ENCODE measurements at regions of chr15 and their contacts with region 1.

Region 1: DNA sequence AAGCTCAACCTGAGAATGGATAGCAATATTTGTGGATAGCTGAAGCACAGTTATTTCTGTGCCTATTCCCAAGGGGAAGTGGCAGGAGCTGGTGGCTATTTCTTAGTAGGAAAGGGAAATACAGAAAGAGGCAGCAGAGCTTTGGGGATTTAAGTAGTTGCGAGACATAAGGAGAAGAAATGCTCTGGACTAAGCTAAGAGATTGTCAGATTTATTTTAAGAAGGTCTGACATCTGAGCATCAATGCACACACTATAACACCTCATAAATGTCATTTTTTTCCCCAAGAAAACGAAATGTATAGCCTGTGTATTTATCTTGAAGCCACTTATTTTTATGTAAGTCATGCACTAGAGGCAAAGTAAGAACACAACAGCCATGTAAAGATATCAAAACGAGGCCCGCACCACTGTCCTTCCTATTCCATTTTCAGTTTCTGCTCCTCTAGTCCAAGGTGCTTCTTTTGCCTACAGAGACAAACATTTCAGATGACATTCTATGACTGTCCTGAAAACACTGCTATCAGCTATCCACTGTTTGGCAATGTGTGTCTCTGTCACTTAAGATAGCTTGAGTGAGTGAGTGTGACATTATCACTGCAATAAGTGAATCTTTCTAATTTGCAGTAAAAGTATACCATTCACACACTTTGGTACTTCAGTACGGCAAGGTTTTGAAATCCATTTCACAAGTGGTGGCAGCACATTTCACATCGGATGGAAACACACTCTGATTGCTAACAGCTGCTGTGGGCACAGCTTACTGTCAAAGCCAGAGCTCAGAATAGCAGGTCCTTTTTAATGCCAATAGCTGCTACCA is 62.7 kb upstream of the ICE2 start:
- DNase-seq: no peak
- H3K4me3 ChIP-seq: peak overlapping the region in 1 of 2 donors; percentile 2
- H3K4me3 Mint-ChIP-seq: peak overlapping the region; percentile 64 to 87 (median 80)
- H3K27ac ChIP-seq: peak overlapping the region; percentile 58
- H3K27ac Mint-ChIP-seq: peak overlapping the region; percentile 85 to 99 (median 92)
- H3K4me1 ChIP-seq: peaks cover 100% of the 10 kb centered on the region
- H3K4me1 Mint-ChIP-seq: peaks cover 84 to 100% (median 92%) of the 10 kb centered on the region in 4 donors
- H3K27me3 ChIP-seq: no peaks in the 10 kb centered on the region
- H3K27me3 Mint-ChIP-seq: no peaks in the 10 kb centered on the region

Region 2: GRCh38 chr15:60526127-60526625 is 15.5 kb before region 1 on chr15:
- CTCF ChIA-PET with region 1: interaction called, 35 read pairs
- POLR2A ChIA-PET with region 1: interaction called, 7 read pairs
- intact Hi-C with region 1: loop called (anchors 2 kb)
- DNase-seq: peak in 4 of 5 donors; percentile 35 to 73 (median 46)
- H3K4me3 ChIP-seq: no peak overlapping the region
- H3K4me3 Mint-ChIP-seq: peak overlapping the region in 7 of 8 donors; percentile 8 to 63 (median 39)
- H3K27ac ChIP-seq: peak overlapping the region; percentile 71
- H3K27ac Mint-ChIP-seq: peak overlapping the region; percentile 88 to 100 (median 97)
- H3K4me1 ChIP-seq: peaks cover 64% of the 10 kb centered on the region
- H3K4me1 Mint-ChIP-seq: peaks cover 61 to 85% (median 72%) of the 10 kb centered on the region in 4 donors
- H3K27me3 ChIP-seq: no peaks in the 10 kb centered on the region
- H3K27me3 Mint-ChIP-seq: no peaks in the 10 kb centered on the region

Region 3: GRCh38 chr15:60557191-60557618 is 15.5 kb after region 1 on chr15:
- CTCF ChIA-PET with region 1: interaction called, 10 read pairs
- POLR2A ChIA-PET with region 1: interaction called, 381 read pairs
- intact Hi-C with region 1: no loop called
- DNase-seq: peak; percentile 51 to 68 (median 64)
- H3K4me3 ChIP-seq: no peak overlapping the region
- H3K4me3 Mint-ChIP-seq: peak overlapping the region in 7 of 8 donors; percentile 9 to 82 (median 73)
- H3K27ac ChIP-seq: peak overlapping the region; percentile 47
- H3K27ac Mint-ChIP-seq: peak overlapping the region; percentile 77 to 94 (median 92)
- H3K4me1 ChIP-seq: peaks cover 92% of the 10 kb centered on the region
- H3K4me1 Mint-ChIP-seq: peaks cover 65 to 91% (median 79%) of the 10 kb centered on the region in 4 donors
- H3K27me3 ChIP-seq: no peaks in the 10 kb centered on the region
- H3K27me3 Mint-ChIP-seq: no peaks in the 10 kb centered on the region

Region 4: DNA sequence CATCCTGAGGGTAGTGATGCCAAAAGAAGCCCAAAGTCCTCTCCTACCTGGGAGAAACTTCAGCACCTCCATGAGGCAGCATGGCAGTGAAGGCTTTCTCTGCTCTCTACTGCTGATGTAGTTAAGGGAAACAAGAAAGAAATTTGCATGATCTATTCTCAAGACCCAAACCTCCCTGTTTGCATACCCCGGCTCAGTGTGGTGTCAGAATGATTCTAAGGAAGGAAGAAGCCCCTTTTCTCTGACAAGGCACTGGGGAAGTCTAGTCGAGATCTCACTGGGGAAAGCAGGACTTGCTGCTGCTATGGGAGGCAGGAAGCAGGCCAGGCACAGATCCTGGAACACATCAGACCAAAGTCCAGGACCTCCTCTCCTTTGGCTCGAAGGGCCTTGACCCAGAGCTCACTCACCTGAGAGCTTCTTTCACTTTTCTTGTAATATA is 26.6 kb after region 1 on chr15:
- CTCF ChIA-PET with region 1: interaction called, 4 read pairs
- POLR2A ChIA-PET with region 1: interaction called, 381 read pairs
- intact Hi-C with region 1: no loop called
- DNase-seq: peak in 1 of 5 donors; percentile 39
- H3K4me3 ChIP-seq: peak overlapping the region; percentile 2 to 20
- H3K4me3 Mint-ChIP-seq: peak overlapping the region; percentile 8 to 77 (median 70)
- H3K27ac ChIP-seq: peak overlapping the region; percentile 61
- H3K27ac Mint-ChIP-seq: peak overlapping the region; percentile 81 to 97 (median 92)
- H3K4me1 ChIP-seq: peaks cover 99% of the 10 kb centered on the region
- H3K4me1 Mint-ChIP-seq: peaks cover 84 to 98% (median 90%) of the 10 kb centered on the region in 4 donors
- H3K27me3 ChIP-seq: no peaks in the 10 kb centered on the region
- H3K27me3 Mint-ChIP-seq: no peaks in the 10 kb centered on the region

Region 5: GRCh38 chr15:60573936-60574335 is 32.2 kb after region 1 on chr15:
- CTCF ChIA-PET with region 1: interaction called, 4 read pairs
- POLR2A ChIA-PET with region 1: interaction called, 381 read pairs
- intact Hi-C with region 1: no loop called
- DNase-seq: peak; percentile 61 to 90 (median 63)
- H3K4me3 ChIP-seq: peak overlapping the region in 1 of 2 donors; percentile 12
- H3K4me3 Mint-ChIP-seq: peak overlapping the region; percentile 81 to 94 (median 89)
- H3K27ac ChIP-seq: peak overlapping the region; percentile 74
- H3K27ac Mint-ChIP-seq: peak overlapping the region; percentile 92 to 100 (median 99)
- H3K4me1 ChIP-seq: peaks cover 99% of the 10 kb centered on the region
- H3K4me1 Mint-ChIP-seq: peaks cover 76 to 96% (median 86%) of the 10 kb centered on the region in 4 donors
- H3K27me3 ChIP-seq: no peaks in the 10 kb centered on the region
- H3K27me3 Mint-ChIP-seq: no peaks in the 10 kb centered on the region

Region 6: GRCh38 chr15:60580650-60581376 is 39.1 kb after region 1 on chr15:
- CTCF ChIA-PET with region 1: interaction called, 9 read pairs
- POLR2A ChIA-PET with region 1: interaction called, 381 read pairs
- intact Hi-C with region 1: no loop called
- DNase-seq: peak; percentile 74 to 88 (median 83)
- H3K4me3 ChIP-seq: peak overlapping the region in 1 of 2 donors; percentile 16
- H3K4me3 Mint-ChIP-seq: peak overlapping the region; percentile 73 to 89 (median 82)
- H3K27ac ChIP-seq: peak overlapping the region; percentile 92
- H3K27ac Mint-ChIP-seq: peak overlapping the region; percentile 92 to 98 (median 97)
- H3K4me1 ChIP-seq: peaks cover 99% of the 10 kb centered on the region
- H3K4me1 Mint-ChIP-seq: peaks cover 73 to 96% (median 85%) of the 10 kb centered on the region in 4 donors
- H3K27me3 ChIP-seq: no peaks in the 10 kb centered on the region
- H3K27me3 Mint-ChIP-seq: no peaks in the 10 kb centered on the region

Region 7: DNA sequence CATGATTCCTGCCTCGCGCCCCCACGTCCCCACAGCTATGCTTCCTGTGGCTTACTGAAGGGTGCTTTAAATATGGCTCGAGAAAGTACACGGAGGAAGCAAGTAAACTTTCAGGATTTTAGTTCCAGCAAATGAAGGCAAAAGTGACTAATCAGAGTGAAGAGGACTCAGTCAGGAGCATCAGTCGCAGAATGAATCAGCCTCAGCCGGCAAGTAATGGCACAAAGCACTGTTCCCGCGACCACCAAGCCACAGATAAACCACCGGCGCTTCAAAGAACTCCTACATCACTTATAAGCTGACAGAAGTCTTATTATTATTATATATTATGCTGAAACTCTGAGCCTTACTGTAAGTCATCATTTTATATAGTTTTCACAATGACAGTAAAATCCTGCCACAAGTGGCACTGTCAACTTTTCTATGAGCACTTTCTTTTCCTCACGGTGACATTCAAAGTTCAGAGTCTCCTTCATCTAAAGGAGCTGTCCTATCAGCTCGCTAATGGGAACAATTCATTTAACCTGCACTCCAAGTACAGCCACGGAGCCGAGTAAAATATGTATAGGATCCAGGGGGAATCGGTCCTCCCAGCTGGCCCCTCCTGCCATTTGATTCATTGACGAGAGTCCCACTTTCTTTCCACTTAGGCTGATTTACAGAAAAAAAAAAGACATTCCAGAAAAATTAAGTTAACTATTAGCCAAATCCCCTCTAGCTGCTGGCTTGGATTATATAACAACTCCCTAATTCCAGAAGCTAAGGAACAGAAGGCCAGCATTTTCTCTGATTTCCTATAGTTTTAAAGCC is 154.2 kb after region 1 on chr15:
- CTCF ChIA-PET with region 1: no interaction called
- POLR2A ChIA-PET with region 1: no interaction called
- intact Hi-C with region 1: no loop called
- DNase-seq: peak in 4 of 5 donors; percentile 18 to 79 (median 29)
- H3K4me3 ChIP-seq: peak overlapping the region; percentile 29 to 43
- H3K4me3 Mint-ChIP-seq: peak overlapping the region; percentile 48 to 87 (median 84)
- H3K27ac ChIP-seq: peak overlapping the region; percentile 37
- H3K27ac Mint-ChIP-seq: peak overlapping the region; percentile 55 to 95 (median 92)
- H3K4me1 ChIP-seq: peaks cover 67% of the 10 kb centered on the region
- H3K4me1 Mint-ChIP-seq: peaks cover 68 to 84% (median 78%) of the 10 kb centered on the region in 4 donors
- H3K27me3 ChIP-seq: no peaks in the 10 kb centered on the region
- H3K27me3 Mint-ChIP-seq: no peaks in the 10 kb centered on the region

Region 8: GRCh38 chr15:60713119-60714084 is 171.7 kb after region 1 on chr15:
- CTCF ChIA-PET with region 1: no interaction called
- POLR2A ChIA-PET with region 1: no interaction called
- intact Hi-C with region 1: no loop called
- DNase-seq: no peak
- H3K4me3 ChIP-seq: no peak overlapping the region
- H3K4me3 Mint-ChIP-seq: no peak overlapping the region
- H3K27ac ChIP-seq: no peak overlapping the region
- H3K27ac Mint-ChIP-seq: peak overlapping the region in 1 of 7 donors; percentile 7
- H3K4me1 ChIP-seq: peaks cover 24% of the 10 kb centered on the region
- H3K4me1 Mint-ChIP-seq: peaks cover 13 to 44% (median 22%) of the 10 kb centered on the region in 4 donors
- H3K27me3 ChIP-seq: no peaks in the 10 kb centered on the region
- H3K27me3 Mint-ChIP-seq: no peaks in the 10 kb centered on the region